ENCODE measurements at regions of chr17 and their contacts with region 1.

Region 1: DNA sequence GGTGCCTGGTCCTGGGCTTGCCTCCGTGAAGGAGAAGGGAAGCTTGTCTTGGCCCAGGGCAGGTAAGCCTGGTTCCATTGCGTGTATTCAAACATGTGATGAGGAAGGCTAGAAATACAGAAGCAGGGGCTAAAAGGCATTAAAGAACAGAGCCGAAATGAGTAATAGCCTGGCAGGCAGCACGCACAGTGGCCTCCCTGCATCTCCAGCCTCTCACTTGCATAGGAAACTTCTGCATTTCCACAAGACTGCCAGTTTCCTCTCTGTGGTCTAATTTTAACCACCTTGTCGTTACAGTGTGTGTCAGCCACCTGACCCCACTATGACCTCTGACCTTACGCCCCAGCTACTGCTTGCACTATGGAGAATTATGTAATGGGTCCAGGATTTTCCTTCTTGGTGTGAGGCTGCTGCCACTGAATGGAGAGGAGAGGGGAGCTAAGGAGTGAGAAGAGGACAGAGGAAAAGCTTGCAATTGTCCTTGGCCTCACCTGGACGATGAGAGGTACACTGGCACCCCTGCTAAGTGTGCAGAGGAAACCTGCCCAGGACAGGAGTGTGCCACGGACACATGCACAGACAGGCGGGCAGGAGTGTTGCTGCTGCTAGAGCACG is 32.8 kb downstream of the HIC1 start:
- DNase-seq: peak; percentile 48
- ATAC-seq: peak; percentile 63
- H3K4me3 Mint-ChIP-seq: peak overlapping the region; percentile 60
- H3K27ac Mint-ChIP-seq: peak overlapping the region; percentile 72
- H3K4me1 Mint-ChIP-seq: peaks cover 80% of the 10 kb centered on the region
- H3K27me3 Mint-ChIP-seq: no peaks in the 10 kb centered on the region
- CTCF ChIP-seq: no peak

Region 2: GRCh38 chr17:1829592-1830257 is 258.0 kb before region 1 on chr17 and contains the starts of genes RPA1 and SMYD4:
- CTCF ChIA-PET with region 1: no interaction called
- POLR2A ChIA-PET with region 1: no interaction called
- intact Hi-C with region 1: no loop called
- DNase-seq: peak; percentile 94
- ATAC-seq: peak; percentile 94
- H3K4me3 Mint-ChIP-seq: peak within 1 kb of the TSS; percentile 91
- H3K27ac Mint-ChIP-seq: peak within 1 kb of the TSS; percentile 83
- H3K4me1 Mint-ChIP-seq: peaks cover 44% of the 10 kb centered on the region
- H3K27me3 Mint-ChIP-seq: no peaks in the 10 kb centered on the region
- CTCF ChIP-seq: no peak
- total RNA-seq, gene RPA1: 99.8 and 109 TPM in 2 replicates
- total RNA-seq, gene SMYD4: 19.9 and 21.8 TPM in 2 replicates

Region 3: DNA sequence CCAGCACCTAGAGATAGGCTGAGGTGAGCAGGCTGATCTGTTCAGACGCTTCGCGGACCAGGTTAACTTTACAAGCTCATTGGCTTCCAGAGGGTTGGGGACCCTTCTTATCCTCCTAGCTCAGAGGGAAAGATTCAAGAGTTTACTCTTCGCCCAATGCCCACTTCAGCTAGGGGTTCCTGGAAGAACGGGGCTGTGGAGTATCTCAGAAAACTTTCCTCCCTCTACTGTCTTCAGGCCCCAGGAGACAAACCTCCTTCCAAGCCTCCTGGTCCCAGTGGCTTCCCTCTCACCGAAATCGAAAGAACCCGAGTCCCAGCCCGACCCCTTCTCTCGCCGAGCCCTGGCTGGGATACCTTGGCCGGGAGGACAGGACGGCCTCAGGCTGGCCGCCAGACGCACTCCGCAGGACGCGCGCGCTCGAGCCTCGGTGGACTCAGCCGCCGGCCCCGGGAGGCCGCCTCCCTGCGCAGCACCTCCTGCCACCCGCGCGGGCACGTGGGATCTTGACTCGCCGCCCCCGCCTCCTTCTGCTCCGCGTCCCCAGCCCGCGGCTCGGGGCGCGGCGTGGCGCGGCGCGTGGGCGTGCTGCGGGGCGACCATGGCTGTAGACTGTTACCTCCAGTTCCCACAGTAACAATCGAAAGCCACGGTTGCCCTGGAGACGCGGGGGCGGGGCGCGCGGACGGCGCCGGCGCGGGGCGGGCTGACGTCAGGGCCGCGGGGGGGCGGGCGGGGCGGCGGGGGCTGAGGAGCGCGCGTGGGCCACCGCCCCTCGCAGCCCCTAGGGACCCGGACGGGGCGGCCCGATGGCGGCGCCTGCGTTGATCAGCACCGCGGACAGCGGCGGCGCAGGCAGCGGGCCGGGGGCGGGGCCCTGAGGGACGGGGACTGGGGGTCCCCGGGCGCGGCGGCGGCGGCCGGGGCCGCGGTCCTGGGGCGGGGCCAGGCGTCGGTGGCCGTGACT is 38.1 kb before region 1 on chr17:
- CTCF ChIA-PET with region 1: interaction called, 98 read pairs
- POLR2A ChIA-PET with region 1: interaction called, 449 read pairs
- intact Hi-C with region 1: no loop called
- DNase-seq: peak; percentile 91
- ATAC-seq: peak; percentile 81
- H3K4me3 Mint-ChIP-seq: peak overlapping the region; percentile 72
- H3K27ac Mint-ChIP-seq: peak overlapping the region; percentile 53
- H3K4me1 Mint-ChIP-seq: peaks cover 30% of the 10 kb centered on the region
- H3K27me3 Mint-ChIP-seq: peaks cover 15% of the 10 kb centered on the region
- CTCF ChIP-seq: no peak

Region 4: DNA sequence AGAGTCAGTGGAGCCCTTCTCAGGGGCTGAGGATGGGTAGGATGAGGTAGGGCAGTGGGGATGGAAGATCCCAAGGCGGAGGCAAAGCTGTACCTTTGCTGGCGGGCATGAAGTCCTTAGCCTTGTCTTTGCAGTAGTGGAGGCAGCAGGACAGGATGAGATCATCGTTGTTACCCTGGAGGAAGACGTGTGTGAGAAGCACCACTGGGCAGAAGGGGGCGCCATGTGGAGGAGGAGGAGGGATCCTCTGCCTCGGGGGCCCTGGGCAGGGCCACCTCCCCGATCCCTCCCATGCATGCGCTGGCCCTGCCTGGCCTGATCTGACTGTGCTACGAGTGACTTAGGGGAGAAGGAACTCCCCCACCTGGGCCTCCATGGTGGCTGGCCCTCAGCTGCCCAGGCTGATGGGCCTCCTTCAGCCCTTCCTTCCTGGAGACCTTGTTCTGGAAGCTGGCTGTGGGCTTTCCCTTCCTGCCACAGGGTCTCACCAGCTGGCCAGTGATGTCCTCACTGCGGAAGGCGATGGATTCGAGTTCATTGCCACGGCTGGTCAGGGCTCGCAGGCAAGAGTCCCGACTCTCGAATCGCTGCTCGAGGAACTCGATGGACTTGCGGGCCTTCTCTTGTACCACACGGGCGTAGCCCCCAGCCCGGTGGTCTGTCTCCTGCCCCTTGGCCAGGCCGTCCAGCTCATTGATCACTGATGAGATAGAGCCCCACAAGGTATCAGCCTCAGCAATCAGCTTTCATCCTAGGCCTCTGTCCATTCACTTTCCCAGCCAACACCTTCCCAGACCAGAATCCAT is 22.5 kb before region 1 on chr17:
- CTCF ChIA-PET with region 1: interaction called, 98 read pairs
- POLR2A ChIA-PET with region 1: interaction called, 449 read pairs
- intact Hi-C with region 1: loop called (anchors 1 kb)
- DNase-seq: no peak
- ATAC-seq: no peak
- H3K4me3 Mint-ChIP-seq: peak overlapping the region; percentile 67
- H3K27ac Mint-ChIP-seq: peak overlapping the region; percentile 16
- H3K4me1 Mint-ChIP-seq: peaks cover 46% of the 10 kb centered on the region
- H3K27me3 Mint-ChIP-seq: no peaks in the 10 kb centered on the region
- CTCF ChIP-seq: no peak

Region 5: DNA sequence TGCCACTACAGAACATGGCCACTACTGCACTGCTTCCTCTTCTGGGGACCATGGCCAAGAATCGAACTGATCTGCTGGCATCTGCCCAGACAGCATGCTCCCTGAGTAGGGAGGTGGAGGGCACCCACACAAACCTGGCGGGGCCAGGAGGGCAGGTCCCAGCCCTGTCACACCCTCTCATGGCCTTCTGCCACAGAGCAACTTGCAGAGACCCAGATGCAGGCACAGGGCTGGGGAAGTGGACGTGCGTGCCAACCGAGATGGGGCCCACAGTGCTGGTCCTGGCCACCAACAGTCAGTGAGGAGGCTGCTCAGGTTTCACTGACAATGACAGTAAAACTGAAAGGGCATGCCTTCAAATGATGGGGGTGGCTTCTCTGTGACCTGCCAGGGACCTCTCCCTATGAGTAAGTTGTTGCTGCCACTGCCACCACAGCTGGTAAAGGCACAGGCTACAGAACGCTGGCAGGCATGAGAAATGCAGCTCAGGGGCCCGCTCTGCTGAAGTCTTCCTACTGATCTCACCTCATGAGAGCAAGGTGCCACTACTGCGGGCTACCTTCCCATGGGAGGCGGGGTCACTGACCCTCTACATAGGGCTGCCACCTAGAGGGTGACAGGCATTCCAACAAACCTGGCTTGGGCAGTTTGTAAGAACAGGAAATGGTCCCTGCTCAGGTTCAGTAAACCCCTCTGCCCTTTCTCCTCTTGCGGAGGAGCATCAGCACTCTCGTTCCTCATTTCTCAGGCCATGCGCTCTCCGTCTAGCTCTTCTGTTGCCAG is 17.3 kb before region 1 on chr17:
- CTCF ChIA-PET with region 1: interaction called, 5 read pairs
- POLR2A ChIA-PET with region 1: interaction called, 449 read pairs
- intact Hi-C with region 1: loop called (anchors 1 kb)
- DNase-seq: no peak
- ATAC-seq: peak; percentile 90
- H3K4me3 Mint-ChIP-seq: peak overlapping the region; percentile 59
- H3K27ac Mint-ChIP-seq: peak overlapping the region; percentile 79
- H3K4me1 Mint-ChIP-seq: peaks cover 43% of the 10 kb centered on the region
- H3K27me3 Mint-ChIP-seq: no peaks in the 10 kb centered on the region
- CTCF ChIP-seq: no peak

Region 6: GRCh38 chr17:2122641-2123302 is 35.1 kb after region 1 on chr17:
- CTCF ChIA-PET with region 1: interaction called, 3 read pairs
- POLR2A ChIA-PET with region 1: interaction called, 7 read pairs
- intact Hi-C with region 1: loop called (anchors 5 kb)
- DNase-seq: no peak
- ATAC-seq: peak; percentile 18
- H3K4me3 Mint-ChIP-seq: peak overlapping the region; percentile 16
- H3K27ac Mint-ChIP-seq: no peak overlapping the region
- H3K4me1 Mint-ChIP-seq: peaks cover 29% of the 10 kb centered on the region
- H3K27me3 Mint-ChIP-seq: no peaks in the 10 kb centered on the region
- CTCF ChIP-seq: no peak

Region 7: DNA sequence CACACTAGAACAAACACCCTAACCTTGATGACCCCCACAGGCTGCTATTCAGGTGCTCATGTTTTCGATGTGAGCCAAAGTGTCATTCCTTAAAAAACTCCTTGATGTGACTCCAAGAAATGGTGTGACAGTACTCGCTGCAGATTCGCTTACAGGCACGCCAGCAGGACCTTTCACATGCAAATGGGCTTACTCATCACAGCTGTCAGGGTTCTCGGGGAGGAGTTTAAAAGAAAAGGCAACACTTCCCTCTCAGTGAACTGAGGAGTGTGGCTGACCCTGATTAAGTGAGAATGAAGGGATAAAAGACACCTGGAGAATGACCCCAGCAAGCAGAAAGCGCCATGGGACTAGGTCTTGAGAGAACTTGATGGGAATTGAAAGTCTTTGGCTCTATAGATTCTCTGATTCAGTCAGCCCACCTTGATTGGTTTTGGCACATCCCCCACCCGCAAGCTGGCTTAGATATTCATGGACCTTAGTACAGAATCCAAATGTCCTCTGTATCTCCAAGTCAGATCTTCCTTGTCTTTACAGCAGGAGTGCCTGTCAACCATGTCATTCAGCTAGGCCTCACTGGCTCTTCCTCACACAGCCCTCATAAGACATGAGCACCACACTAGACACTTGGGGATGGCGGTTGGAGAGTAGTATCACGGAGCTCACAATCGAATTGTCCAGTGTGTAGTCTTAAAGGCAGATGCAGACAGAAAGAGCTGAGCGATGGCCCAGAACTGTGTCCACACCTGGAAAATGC is 49.8 kb after region 1 on chr17:
- CTCF ChIA-PET with region 1: no interaction called
- POLR2A ChIA-PET with region 1: interaction called, 21 read pairs
- intact Hi-C with region 1: loop called (anchors 1 kb)
- DNase-seq: no peak
- ATAC-seq: peak; percentile 91
- H3K4me3 Mint-ChIP-seq: no peak overlapping the region
- H3K27ac Mint-ChIP-seq: peak overlapping the region; percentile 84
- H3K4me1 Mint-ChIP-seq: peaks cover 24% of the 10 kb centered on the region
- H3K27me3 Mint-ChIP-seq: no peaks in the 10 kb centered on the region
- CTCF ChIP-seq: no peak

Measured in activated B cell treated with CpG ODN at 0.5 μM for 24 hours (primary cell).